ENCODE measurements at regions of chr12 and their contacts with region 1.

Region 1: GRCh38 chr12:121917979-121918678 is at the start of gene CFAP251:
- DNase-seq: peak; percentile 96 to 100 (median 99)
- ATAC-seq: peak; percentile 98 to 100 (median 99)
- H3K4me3 ChIP-seq: peak within 1 kb of the TSS; percentile 33 to 62 (median 42)
- H3K27ac ChIP-seq: peak within 1 kb of the TSS; percentile 58 to 78 (median 72)
- H3K4me1 ChIP-seq: peaks cover 0 to 9% (median 6%) of the 10 kb centered on the region in 3 donors
- H3K27me3 ChIP-seq: no peaks in the 10 kb centered on the region
- CTCF ChIP-seq: peak; percentile 29 to 72 (median 64)
- total RNA-seq, gene CFAP251: 1.7 to 4.6 (median 2.9) TPM

Region 2: DNA sequence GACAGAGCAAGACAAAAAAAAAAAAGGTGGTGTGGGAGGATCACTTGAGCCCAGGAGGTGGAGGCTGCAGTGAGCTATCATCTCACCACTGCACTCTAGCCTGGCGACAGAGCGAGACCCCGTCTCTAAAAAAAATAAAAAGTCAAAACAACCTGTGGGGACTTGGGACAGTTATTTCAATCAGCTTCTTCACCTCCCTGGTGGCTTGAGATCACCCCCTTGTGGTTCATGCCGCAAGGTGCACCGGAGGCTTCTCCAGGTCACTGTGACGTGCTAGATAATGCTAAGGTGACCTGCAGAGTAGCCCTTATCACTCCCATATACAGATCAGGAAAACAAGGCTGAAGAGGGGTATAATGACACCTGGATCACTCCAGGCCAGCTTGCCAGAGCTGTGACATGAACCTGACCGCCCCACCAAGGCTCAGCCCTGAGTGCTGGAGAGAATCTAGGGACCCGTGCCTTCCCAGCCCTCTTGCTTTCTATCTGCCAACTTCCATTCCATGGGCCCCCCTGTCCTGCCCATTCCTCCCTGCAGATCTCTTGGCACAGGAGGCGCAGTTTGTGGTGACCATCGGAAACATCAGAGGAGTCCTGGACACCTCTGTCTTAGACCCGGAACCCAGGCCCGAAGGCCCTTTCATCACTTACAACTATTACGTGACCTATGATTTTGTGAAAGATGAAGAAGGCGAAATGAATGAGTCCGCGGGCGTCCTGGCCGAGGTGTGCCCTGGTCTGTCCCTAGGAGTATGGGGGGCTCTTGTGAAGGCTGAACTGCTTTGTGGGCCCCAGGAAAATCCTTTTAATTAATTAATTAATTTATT is 272.9 kb after region 1 on chr12:
- intact Hi-C with region 1: loop called in 1 of 3 experiments (anchors 10 kb)
- DNase-seq: peak; percentile 64 to 85 (median 75)
- ATAC-seq: peak; percentile 82 to 100 (median 96)
- H3K4me3 ChIP-seq: no peak overlapping the region
- H3K27ac ChIP-seq: no peak overlapping the region
- H3K4me1 ChIP-seq: no peaks in the 10 kb centered on the region
- H3K27me3 ChIP-seq: no peaks in the 10 kb centered on the region
- CTCF ChIP-seq: peak; percentile 53 to 73 (median 71)